CD4-positive, alpha-beta memory T cell (primary cell): ENCODE measurements at regions of chr3 and their contacts with region 1.

Region 1: GRCh38 chr3:128051837-128052594 is at the start of gene SEC61A1:
- DNase-seq: peak; percentile 94 to 96 (median 95)
- H3K4me3 ChIP-seq: peak within 1 kb of the TSS; percentile 80 to 91
- H3K4me3 Mint-ChIP-seq: peak within 1 kb of the TSS; percentile 92 to 100 (median 98)
- H3K27ac ChIP-seq: peak within 1 kb of the TSS; percentile 93
- H3K27ac Mint-ChIP-seq: peak within 1 kb of the TSS; percentile 94 to 99 (median 98)
- H3K4me1 ChIP-seq: peaks cover 38% of the 10 kb centered on the region
- H3K4me1 Mint-ChIP-seq: peaks cover 35 to 58% (median 42%) of the 10 kb centered on the region in 4 donors
- H3K27me3 ChIP-seq: no peaks in the 10 kb centered on the region
- H3K27me3 Mint-ChIP-seq: no peaks in the 10 kb centered on the region
- total RNA-seq, gene SEC61A1: 203 to 212 TPM

Region 2: DNA sequence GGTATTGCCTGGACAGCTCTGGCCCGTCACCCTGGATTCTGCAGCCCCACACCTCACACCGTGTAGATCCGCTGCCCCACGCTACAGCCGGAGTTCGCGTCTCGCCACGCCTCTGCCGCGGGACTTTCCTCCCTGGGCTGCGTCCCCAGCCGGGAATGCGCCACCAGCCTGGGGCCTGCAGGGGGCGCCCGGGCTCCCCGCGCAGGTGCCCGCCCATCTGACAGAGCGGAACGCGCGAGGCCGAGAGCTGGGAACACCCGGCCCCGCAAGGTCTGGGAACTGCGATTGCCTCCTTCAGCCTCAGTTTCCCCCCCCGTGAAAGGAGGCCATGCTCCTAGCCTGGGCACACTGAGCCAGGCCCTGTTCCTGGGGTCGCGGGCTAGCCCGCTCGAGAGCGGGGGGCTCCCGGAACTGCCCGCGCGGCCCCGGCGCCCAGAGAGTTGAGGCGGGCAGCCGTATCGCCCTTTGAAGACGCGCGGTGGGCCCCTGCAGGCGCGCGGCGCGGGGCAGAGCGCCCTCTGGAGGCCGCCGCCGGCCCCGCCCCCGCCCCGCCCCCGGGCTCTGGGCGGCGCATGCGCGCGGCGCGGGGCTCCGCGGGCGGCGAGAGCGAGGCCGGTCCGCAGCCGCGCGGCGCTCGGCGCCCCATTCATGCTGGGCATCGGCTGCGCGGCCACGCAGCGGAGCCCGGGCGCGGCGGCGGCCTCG is 1069.4 kb before region 1 on chr3 and contains the start of gene PLXNA1:
- CTCF ChIA-PET with region 1: no interaction called
- POLR2A ChIA-PET with region 1: no interaction called
- intact Hi-C with region 1: loop called (anchors 10 kb)
- DNase-seq: peak; percentile 88 to 97 (median 95)
- H3K4me3 ChIP-seq: peak within 1 kb of the TSS; percentile 61 to 76
- H3K4me3 Mint-ChIP-seq: peak within 1 kb of the TSS; percentile 84 to 92 (median 89)
- H3K27ac ChIP-seq: peak within 1 kb of the TSS; percentile 83
- H3K27ac Mint-ChIP-seq: peak within 1 kb of the TSS; percentile 95 to 98 (median 97)
- H3K4me1 ChIP-seq: peaks cover 17% of the 10 kb centered on the region
- H3K4me1 Mint-ChIP-seq: peaks cover 6 to 29% (median 17%) of the 10 kb centered on the region in 4 donors
- H3K27me3 ChIP-seq: no peaks in the 10 kb centered on the region
- H3K27me3 Mint-ChIP-seq: peaks cover 5 to 7% of the 10 kb centered on the region in 2 donors
- total RNA-seq, gene PLXNA1: 18.9 to 21.3 TPM

Region 3: DNA sequence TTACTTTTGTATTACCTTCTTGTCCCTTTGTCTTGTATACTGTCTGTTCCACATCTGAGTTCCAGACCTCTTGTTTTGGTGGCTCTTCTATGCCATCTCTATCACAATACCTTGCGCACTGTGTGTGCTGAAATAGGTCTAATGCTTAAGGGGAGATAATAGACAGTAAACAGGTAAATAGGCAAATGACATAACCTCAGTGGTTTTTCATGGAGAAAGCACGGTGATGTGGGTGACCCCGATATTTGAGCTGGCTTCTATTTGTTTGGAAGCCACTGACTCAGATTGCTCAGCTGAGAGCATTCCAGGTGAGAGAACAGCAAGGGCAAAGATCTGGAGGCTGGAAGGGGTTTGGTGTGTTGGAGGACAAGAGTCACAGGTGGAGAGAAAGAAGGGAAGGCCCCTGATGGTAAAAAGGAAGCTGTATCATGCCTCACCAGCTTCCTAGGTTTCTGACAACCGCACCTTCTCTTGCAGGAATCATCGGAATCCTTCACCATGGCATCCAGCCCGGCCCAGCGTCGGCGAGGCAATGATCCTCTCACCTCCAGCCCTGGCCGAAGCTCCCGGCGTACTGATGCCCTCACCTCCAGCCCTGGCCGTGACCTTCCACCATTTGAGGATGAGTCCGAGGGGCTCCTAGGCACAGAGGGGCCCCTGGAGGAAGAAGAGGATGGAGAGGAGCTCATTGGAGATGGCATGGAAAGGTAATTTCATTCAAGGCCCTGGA is 453.0 kb before region 1 on chr3:
- CTCF ChIA-PET with region 1: no interaction called
- POLR2A ChIA-PET with region 1: no interaction called
- intact Hi-C with region 1: loop called (anchors 1 kb)
- DNase-seq: no peak
- H3K4me3 ChIP-seq: peak overlapping the region; percentile 47 to 62
- H3K4me3 Mint-ChIP-seq: peak overlapping the region; percentile 78 to 90 (median 86)
- H3K27ac ChIP-seq: peak overlapping the region; percentile 51
- H3K27ac Mint-ChIP-seq: peak overlapping the region; percentile 22 to 97 (median 87)
- H3K4me1 ChIP-seq: peaks cover 19% of the 10 kb centered on the region
- H3K4me1 Mint-ChIP-seq: peaks cover 5 to 29% (median 15%) of the 10 kb centered on the region in 4 donors
- H3K27me3 ChIP-seq: no peaks in the 10 kb centered on the region
- H3K27me3 Mint-ChIP-seq: no peaks in the 10 kb centered on the region

Region 4: GRCh38 chr3:127652231-127652995 is 399.6 kb before region 1 on chr3:
- CTCF ChIA-PET with region 1: no interaction called
- POLR2A ChIA-PET with region 1: no interaction called
- intact Hi-C with region 1: no loop called
- DNase-seq: peak in 3 of 5 donors; percentile 17 to 37 (median 22)
- H3K4me3 ChIP-seq: no peak overlapping the region
- H3K4me3 Mint-ChIP-seq: no peak overlapping the region
- H3K27ac ChIP-seq: no peak overlapping the region
- H3K27ac Mint-ChIP-seq: no peak overlapping the region
- H3K4me1 ChIP-seq: no peaks in the 10 kb centered on the region
- H3K4me1 Mint-ChIP-seq: no peaks in the 10 kb centered on the region
- H3K27me3 ChIP-seq: no peaks in the 10 kb centered on the region
- H3K27me3 Mint-ChIP-seq: no peaks in the 10 kb centered on the region

Region 5: GRCh38 chr3:128068211-128068620 is 16.2 kb after region 1 on chr3:
- CTCF ChIA-PET with region 1: interaction called, 30 read pairs
- POLR2A ChIA-PET with region 1: interaction called, 4 read pairs
- intact Hi-C with region 1: no loop called
- DNase-seq: peak in 4 of 5 donors; percentile 39 to 47 (median 42)
- H3K4me3 ChIP-seq: no peak overlapping the region
- H3K4me3 Mint-ChIP-seq: no peak overlapping the region
- H3K27ac ChIP-seq: no peak overlapping the region
- H3K27ac Mint-ChIP-seq: peak overlapping the region in 4 of 7 donors; percentile 5 to 74 (median 60)
- H3K4me1 ChIP-seq: no peaks in the 10 kb centered on the region
- H3K4me1 Mint-ChIP-seq: peaks cover 1 to 6% (median 3%) of the 10 kb centered on the region in 4 donors
- H3K27me3 ChIP-seq: no peaks in the 10 kb centered on the region
- H3K27me3 Mint-ChIP-seq: no peaks in the 10 kb centered on the region

Region 6: DNA sequence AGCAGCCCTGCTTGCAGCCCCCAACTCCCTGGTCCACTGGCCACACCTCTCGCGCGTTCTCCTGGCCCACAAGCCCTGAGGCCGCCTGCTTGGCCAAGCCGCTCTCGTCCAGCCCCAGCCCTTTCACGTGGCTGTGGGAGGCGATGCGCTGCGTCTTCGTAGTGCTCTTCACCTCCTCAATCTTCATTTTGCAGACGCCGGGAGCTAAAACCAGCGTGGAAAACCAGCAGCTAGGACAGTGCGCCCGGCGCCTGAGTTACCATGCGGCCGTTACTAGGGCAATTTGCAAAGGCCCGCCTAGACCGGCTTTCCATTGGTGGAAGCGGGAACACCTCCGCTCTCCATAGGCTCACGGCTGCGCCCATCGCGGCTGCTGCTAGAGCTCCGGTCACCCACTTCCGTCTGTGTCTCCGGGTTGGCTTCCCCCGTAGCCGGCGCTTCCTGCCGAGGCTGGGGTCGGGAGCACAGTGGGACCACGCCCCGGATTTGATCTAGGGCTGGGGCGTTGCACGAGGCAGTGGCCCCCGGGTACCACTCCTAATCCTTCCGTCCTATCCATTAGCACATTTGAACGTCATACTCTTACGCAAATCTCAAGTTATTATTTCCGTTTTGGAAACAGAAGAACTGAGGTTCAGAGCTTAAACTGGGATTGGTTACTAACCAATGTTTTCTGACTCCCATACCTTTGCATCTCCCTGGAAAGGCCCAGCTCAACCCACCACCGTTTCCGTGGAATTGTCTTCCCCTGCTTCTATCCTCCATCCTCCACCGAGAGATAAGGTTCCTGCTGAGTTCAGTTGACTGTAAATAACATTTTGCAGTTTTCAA is 71.7 kb after region 1 on chr3 and contains the start of gene RUVBL1:
- CTCF ChIA-PET with region 1: no interaction called
- POLR2A ChIA-PET with region 1: interaction called, 15 read pairs
- intact Hi-C with region 1: loop called (anchors 1 kb)
- DNase-seq: peak; percentile 97 to 99 (median 99)
- H3K4me3 ChIP-seq: peak within 1 kb of the TSS; percentile 68 to 96
- H3K4me3 Mint-ChIP-seq: peak within 1 kb of the TSS; percentile 94 to 98 (median 96)
- H3K27ac ChIP-seq: peak within 1 kb of the TSS; percentile 78
- H3K27ac Mint-ChIP-seq: peak within 1 kb of the TSS; percentile 91 to 99 (median 97)
- H3K4me1 ChIP-seq: peaks cover 22% of the 10 kb centered on the region
- H3K4me1 Mint-ChIP-seq: peaks cover 15 to 31% (median 27%) of the 10 kb centered on the region in 4 donors
- H3K27me3 ChIP-seq: no peaks in the 10 kb centered on the region
- H3K27me3 Mint-ChIP-seq: no peaks in the 10 kb centered on the region
- total RNA-seq, gene RUVBL1: 26.6 to 27.0 TPM

Region 7: GRCh38 chr3:128879125-128879969 is 827.3 kb after region 1 on chr3 and contains the start of gene ACAD9:
- CTCF ChIA-PET with region 1: no interaction called
- POLR2A ChIA-PET with region 1: no interaction called
- intact Hi-C with region 1: loop called (anchors 5 kb)
- DNase-seq: peak; percentile 97
- H3K4me3 ChIP-seq: peak within 1 kb of the TSS; percentile 82 to 91
- H3K4me3 Mint-ChIP-seq: peak within 1 kb of the TSS; percentile 85 to 97 (median 94)
- H3K27ac ChIP-seq: peak within 1 kb of the TSS; percentile 92
- H3K27ac Mint-ChIP-seq: peak within 1 kb of the TSS; percentile 92 to 99 (median 99)
- H3K4me1 ChIP-seq: peaks cover 38% of the 10 kb centered on the region
- H3K4me1 Mint-ChIP-seq: peaks cover 47 to 79% (median 61%) of the 10 kb centered on the region in 4 donors
- H3K27me3 ChIP-seq: no peaks in the 10 kb centered on the region
- H3K27me3 Mint-ChIP-seq: no peaks in the 10 kb centered on the region
- total RNA-seq, gene ACAD9: 54.9 to 62.2 TPM